ENCODE measurements at regions of chr3 and their contacts with region 1.

Region 1: GRCh38 chr3:197749601-197750395 is at the start of gene FYTTD1:
- DNase-seq: peak; percentile 87
- H3K4me3 ChIP-seq: peak within 1 kb of the TSS; percentile 59 to 87 (median 62)
- H3K27ac ChIP-seq: peak within 1 kb of the TSS; percentile 35
- H3K4me1 ChIP-seq: peaks cover 13% of the 10 kb centered on the region
- H3K27me3 ChIP-seq: no peaks in the 10 kb centered on the region
- CTCF ChIP-seq: peak; percentile 18 to 45
- POLR2A ChIP-seq: peak; percentile 81
- total RNA-seq, gene FYTTD1: 52.3 and 59.3 TPM in 2 replicates

Region 2: DNA sequence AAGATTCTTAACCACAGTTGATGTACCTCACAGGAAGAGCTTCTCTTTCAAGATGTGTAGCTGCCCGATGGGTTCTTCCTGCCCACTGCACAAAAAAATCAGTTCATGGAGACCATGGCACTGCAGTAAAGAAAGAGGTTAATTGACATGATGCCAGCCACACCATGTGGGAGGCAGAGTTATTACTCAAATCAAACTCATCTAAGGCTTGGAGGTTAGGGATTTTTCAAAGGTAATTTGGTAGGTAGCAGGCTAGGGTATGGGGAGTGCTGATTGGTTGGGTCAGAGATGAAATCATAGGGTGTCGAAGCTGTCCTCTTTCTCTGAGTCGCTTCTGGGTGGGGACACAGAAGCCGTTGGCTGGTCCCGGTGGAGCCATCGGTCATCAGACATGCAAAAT is 136.6 kb before region 1 on chr3:
- CTCF ChIA-PET with region 1: no interaction called
- POLR2A ChIA-PET with region 1: no interaction called
- dilution Hi-C with region 1: no loop called
- intact Hi-C with region 1: no loop called
- DNase-seq: no peak
- H3K4me3 ChIP-seq: no peak overlapping the region
- H3K27ac ChIP-seq: no peak overlapping the region
- H3K4me1 ChIP-seq: no peaks in the 10 kb centered on the region
- H3K27me3 ChIP-seq: no peaks in the 10 kb centered on the region
- CTCF ChIP-seq: no peak
- POLR2A ChIP-seq: no peak

Region 3: GRCh38 chr3:197667978-197668377 is 81.8 kb before region 1 on chr3:
- CTCF ChIA-PET with region 1: no interaction called
- POLR2A ChIA-PET with region 1: no interaction called
- dilution Hi-C with region 1: no loop called
- intact Hi-C with region 1: no loop called
- DNase-seq: no peak
- H3K4me3 ChIP-seq: no peak overlapping the region
- H3K27ac ChIP-seq: no peak overlapping the region
- H3K4me1 ChIP-seq: no peaks in the 10 kb centered on the region
- H3K27me3 ChIP-seq: no peaks in the 10 kb centered on the region
- CTCF ChIP-seq: no peak
- POLR2A ChIP-seq: no peak

Region 4: DNA sequence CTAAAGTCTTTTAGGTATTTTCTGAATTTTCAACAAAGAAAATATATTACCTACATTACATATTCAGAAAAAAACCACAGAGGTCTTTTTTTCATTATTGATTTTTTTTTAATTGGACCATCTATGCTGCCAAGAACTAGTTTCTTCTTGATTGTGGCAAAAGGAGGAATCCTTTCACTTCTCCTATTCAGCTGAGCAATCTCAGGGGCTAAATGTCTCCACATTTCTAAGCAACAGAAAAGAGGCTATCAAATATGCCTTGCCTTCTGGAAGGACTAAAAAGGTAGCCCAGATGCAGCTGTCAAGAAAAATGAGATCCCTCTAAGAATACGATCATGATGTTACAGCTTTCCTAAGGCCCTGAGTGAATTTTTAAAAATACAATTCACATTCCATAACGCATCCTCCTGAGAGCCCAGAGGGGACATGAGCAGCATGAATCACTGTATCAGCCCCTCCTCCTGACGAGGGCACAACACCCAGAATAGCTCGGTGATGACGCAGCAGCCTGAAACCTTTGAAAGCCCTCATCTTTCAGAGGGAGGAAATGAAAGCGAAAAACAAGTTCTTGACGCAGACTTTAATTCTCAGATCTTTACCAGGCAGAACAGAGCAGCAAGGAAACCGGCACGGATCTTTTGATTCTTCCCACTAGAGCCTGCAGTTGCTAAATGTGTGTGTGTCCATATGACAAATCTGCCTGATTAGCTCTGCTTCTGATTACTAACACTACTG is 37.7 kb before region 1 on chr3:
- CTCF ChIA-PET with region 1: interaction called, 4 read pairs
- POLR2A ChIA-PET with region 1: no interaction called
- dilution Hi-C with region 1: no loop called
- intact Hi-C with region 1: loop called (anchors 1 kb)
- DNase-seq: peak; percentile 98
- H3K4me3 ChIP-seq: peak overlapping the region in 1 of 3 experiments; percentile 70
- H3K27ac ChIP-seq: peak overlapping the region; percentile 71
- H3K4me1 ChIP-seq: peaks cover 26% of the 10 kb centered on the region
- H3K27me3 ChIP-seq: no peaks in the 10 kb centered on the region
- CTCF ChIP-seq: no peak
- POLR2A ChIP-seq: peak; percentile 46

Region 5: DNA sequence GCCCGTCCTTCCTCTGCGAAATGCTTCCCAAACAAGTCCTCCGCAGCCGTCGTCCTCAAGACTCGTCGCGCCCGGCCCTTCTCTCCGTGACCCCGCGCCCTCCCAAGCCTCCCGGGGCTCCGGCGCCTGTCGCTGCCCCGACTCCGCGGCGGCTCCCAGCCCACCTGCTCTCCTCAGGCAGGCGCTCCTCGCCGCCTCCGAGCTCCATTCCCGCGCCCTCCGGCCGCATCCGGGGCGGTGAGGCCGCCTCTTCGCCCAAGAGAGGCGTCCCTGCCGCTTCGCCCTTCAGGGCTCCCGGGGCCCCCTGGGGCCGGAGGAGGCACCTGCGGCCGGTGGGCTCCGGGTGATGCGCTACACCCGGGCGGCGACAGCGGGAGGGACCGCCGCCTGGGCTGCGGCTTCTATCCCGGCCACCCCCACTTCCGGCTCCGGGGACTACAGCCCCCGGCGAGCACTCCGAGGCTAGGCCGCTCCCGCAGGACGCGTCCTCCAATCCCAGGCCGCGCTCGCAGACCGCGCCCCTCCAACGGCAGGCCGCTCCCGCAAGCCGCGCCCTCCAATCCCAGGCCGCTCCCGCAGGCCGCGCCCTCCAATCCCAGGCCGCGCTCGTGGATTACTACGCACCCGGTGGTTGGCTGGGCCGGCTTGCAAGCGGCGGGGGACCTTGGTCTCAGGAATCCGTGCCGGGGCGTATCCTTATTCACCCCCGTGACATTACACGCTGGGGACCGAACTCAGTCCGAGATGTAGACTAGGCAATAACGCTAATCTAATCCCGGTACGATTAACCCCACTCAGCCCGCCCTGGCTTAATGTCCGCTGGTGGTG is 13.1 kb before region 1 on chr3 and contains the start of gene RUBCN:
- CTCF ChIA-PET with region 1: interaction called, 7 read pairs
- POLR2A ChIA-PET with region 1: no interaction called
- dilution Hi-C with region 1: no loop called
- intact Hi-C with region 1: loop called (anchors 1 kb)
- DNase-seq: peak; percentile 97
- H3K4me3 ChIP-seq: peak within 1 kb of the TSS; percentile 35 to 82 (median 75)
- H3K27ac ChIP-seq: no peak within 1 kb of the TSS
- H3K4me1 ChIP-seq: peaks cover 7% of the 10 kb centered on the region
- H3K27me3 ChIP-seq: no peaks in the 10 kb centered on the region
- CTCF ChIP-seq: no peak
- POLR2A ChIP-seq: peak; percentile 78
- total RNA-seq, gene RUBCN: 22.9 and 25.8 TPM in 2 replicates

Region 6: DNA sequence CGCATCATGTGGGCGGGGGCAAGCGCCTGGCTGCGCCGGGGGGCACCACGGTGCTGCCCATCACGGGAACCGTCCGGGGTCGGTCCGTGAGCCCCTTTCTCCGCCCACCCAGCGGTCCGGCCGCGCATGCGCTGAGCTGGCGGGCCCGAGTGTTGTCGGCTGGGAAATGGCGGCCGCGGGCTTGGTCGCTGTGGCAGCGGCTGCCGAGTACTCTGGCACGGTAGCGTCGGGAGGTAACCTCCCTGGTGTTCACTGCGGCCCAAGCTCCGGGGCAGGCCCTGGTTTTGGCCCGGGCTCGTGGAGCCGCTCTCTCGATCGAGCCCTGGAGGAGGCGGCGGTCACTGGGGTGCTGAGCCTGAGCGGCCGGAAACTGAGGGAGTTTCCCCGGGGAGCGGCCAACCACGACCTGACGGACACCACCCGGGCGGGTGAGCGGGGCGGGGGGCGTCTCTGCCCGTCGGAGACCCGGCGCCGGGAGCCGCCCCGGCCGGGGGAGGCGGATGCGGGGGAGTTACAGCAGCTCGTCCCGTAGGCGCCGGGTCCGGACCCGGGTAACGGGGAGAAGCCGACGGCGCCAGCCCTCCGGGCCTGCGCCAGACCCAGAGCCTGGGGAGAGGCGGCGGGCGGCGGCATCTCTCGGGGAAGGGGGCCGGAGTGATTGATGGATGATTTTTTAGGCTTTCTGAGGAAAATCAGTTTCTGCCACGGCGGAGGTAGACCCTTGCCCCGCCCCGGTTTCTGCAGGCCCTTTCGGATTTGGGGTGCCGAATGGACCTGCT is 41.5 kb after region 1 on chr3 and contains the start of gene LRCH3:
- CTCF ChIA-PET with region 1: interaction called, 3 read pairs
- POLR2A ChIA-PET with region 1: no interaction called
- dilution Hi-C with region 1: no loop called
- intact Hi-C with region 1: loop called (anchors 1 kb)
- DNase-seq: peak; percentile 90
- H3K4me3 ChIP-seq: peak within 1 kb of the TSS; percentile 60 to 86 (median 68)
- H3K27ac ChIP-seq: peak within 1 kb of the TSS; percentile 92
- H3K4me1 ChIP-seq: peaks cover 14% of the 10 kb centered on the region
- H3K27me3 ChIP-seq: no peaks in the 10 kb centered on the region
- CTCF ChIP-seq: no peak
- POLR2A ChIP-seq: peak; percentile 97
- total RNA-seq, gene LRCH3: 60.3 and 71.2 TPM in 2 replicates

Region 7: GRCh38 chr3:197906023-197906849 is 156.4 kb after region 1 on chr3:
- CTCF ChIA-PET with region 1: no interaction called
- POLR2A ChIA-PET with region 1: no interaction called
- dilution Hi-C with region 1: no loop called
- intact Hi-C with region 1: no loop called
- DNase-seq: peak; percentile 88
- H3K4me3 ChIP-seq: no peak overlapping the region
- H3K27ac ChIP-seq: no peak overlapping the region
- H3K4me1 ChIP-seq: no peaks in the 10 kb centered on the region
- H3K27me3 ChIP-seq: no peaks in the 10 kb centered on the region
- CTCF ChIP-seq: peak; percentile 87 to 89
- POLR2A ChIP-seq: no peak

Measured in endothelial cell of umbilical vein (primary cell).